RWPE1 (cell line): ENCODE measurements at regions of chrX and their contacts with region 1.

Region 1: GRCh38 chrX:132452911-132453550 is 35.8 kb downstream of the MBNL3 start:
- DNase-seq: no peak
- H3K27ac ChIP-seq: no peak overlapping the region
- CTCF ChIP-seq: no peak

Region 2: GRCh38 chrX:132304599-132304998 is 148.4 kb before region 1 on chrX:
- CTCF ChIA-PET with region 1: no interaction called
- POLR2A ChIA-PET with region 1: no interaction called
- DNase-seq: no peak
- H3K27ac ChIP-seq: no peak overlapping the region
- CTCF ChIP-seq: no peak

Region 3: DNA sequence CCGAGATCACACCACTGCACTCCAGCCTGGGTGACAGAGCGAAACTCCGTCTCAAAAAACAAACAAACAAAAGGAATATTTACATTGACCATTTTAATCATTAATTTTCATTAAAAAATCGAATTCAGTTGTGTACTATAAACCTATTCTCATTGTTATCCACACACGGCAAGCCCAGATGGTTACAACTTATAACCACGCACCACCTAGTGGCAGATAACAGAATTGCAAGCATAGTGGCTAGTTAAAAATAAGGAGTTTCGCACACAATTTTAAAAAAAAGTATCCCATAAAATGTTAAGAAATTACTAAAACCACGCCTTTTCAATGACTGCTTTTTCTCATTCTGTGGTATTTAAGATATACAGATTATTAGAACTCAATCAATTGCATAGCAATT is 10.4 kb after region 1 on chrX:
- CTCF ChIA-PET with region 1: no interaction called
- POLR2A ChIA-PET with region 1: no interaction called
- DNase-seq: no peak
- H3K27ac ChIP-seq: no peak overlapping the region
- CTCF ChIP-seq: 0 out of 2 replicates have a peak, but pooled peaks have one; percentile 8

Region 4: GRCh38 chrX:132488819-132489577 is 36.0 kb after region 1 on chrX and contains the start of gene MBNL3:
- CTCF ChIA-PET with region 1: no interaction called
- POLR2A ChIA-PET with region 1: interaction called, 11 read pairs
- DNase-seq: peak; percentile 38
- H3K27ac ChIP-seq: peak within 1 kb of the TSS; percentile 89
- CTCF ChIP-seq: no peak